BJ (cell line): ENCODE measurements at regions of chr4 and their contacts with region 1.

Region 1: GRCh38 chr4:41294445-41295062 is 37.8 kb downstream of the UCHL1 start:
- DNase-seq: no peak
- H3K4me3 ChIP-seq: no peak overlapping the region
- H3K27me3 ChIP-seq: no peaks in the 10 kb centered on the region
- CTCF ChIP-seq: no peak

Region 2: DNA sequence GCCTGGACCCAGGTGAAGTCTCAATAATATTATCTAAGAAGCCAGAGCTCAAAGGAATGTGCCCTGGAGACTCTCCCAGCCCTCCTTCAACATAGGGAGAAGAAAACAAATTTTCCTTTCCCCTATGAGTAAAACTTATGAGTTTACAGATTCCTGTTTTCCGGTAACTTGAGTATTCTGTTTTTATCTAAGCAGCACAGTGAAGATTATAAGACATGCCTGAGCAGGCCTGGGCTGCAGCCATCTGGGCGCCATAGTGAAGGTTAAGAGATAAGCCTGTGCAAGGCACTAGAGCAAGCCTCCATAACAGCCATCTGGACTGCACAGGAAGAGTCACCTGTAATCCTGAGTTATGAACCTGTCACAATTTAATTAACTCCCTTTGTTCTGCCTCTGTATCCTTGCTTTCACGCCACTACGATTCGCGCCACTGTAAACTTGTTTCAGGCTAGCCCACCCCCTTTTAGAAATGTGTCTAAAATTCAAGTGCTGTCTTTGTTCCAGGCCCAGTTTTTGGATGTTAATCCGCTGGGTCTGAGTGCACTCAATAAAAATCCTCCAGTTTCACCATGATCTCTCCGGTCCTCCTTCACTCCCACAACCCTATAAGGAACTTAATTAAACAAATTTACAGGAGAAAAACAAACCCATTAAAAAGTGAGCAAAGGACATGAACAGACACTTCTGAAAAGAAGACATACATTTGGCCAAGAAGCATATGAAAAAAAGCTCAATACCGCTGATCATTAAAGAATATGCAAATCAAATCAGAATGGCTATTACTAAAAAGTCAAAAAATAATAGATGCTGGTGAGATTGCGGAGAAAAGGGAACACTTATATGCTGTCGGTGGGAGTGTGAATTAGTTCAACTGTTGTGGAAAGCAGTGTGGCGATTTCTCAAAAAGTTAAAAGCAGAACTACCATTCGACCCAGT is 269.7 kb before region 1 on chr4:
- CTCF ChIA-PET with region 1: no interaction called
- POLR2A ChIA-PET with region 1: no interaction called
- DNase-seq: no peak
- H3K4me3 ChIP-seq: no peak overlapping the region
- H3K27me3 ChIP-seq: no peaks in the 10 kb centered on the region
- CTCF ChIP-seq: no peak

Region 3: GRCh38 chr4:41323196-41323595 is 28.6 kb after region 1 on chr4:
- CTCF ChIA-PET with region 1: no interaction called
- POLR2A ChIA-PET with region 1: interaction called, 17 read pairs
- DNase-seq: no peak
- H3K4me3 ChIP-seq: no peak overlapping the region
- H3K27me3 ChIP-seq: no peaks in the 10 kb centered on the region
- CTCF ChIP-seq: no peak

Region 4: GRCh38 chr4:41506130-41506529 is 211.6 kb after region 1 on chr4:
- CTCF ChIA-PET with region 1: no interaction called
- POLR2A ChIA-PET with region 1: no interaction called
- DNase-seq: peak; percentile 29
- H3K4me3 ChIP-seq: no peak overlapping the region
- H3K27me3 ChIP-seq: no peaks in the 10 kb centered on the region
- CTCF ChIP-seq: no peak